ENCODE measurements at regions of chr18 and their contacts with region 1.

Region 1: DNA sequence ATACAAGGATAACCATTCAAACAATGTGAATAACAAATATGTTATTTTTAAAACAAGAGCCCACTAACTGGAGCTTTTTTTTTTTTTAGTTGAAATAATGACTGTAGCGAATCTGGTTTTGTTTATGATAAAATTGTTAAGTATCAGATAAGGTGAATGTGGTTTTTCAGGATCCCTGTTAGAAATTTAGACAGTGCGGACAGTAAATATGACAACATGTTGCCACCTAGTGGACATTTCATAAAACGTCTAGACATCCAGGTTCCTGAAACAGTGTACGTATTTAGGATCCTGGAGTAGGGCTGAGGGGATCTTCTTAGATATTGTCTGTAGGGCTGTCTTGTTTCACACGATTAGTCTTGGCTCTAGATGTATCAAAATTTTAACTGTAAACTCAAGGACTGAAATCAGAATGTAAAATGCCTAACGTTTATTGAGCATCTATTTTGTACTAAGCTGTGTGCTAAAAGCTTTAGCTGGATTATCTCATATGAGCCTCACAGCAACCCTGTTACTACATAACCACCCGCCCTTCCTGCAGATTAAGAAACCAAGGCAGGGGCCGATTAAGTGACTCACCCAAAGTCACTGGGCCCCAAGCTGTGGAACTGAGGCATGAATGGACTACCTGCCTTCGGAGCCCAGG is 23.9 kb upstream of the CCDC68 start:
- DNase-seq: peak; percentile 44
- ATAC-seq: peak; percentile 89
- H3K4me3 ChIP-seq: no peak overlapping the region
- H3K27ac ChIP-seq: no peak overlapping the region
- H3K4me1 ChIP-seq: no peaks in the 10 kb centered on the region
- H3K27me3 ChIP-seq: 0 out of 5 replicates have a peak, but pooled peaks cover 0 to 2% of the 10 kb centered on the region in 2 experiments
- CTCF ChIP-seq: peak; percentile 79
- EP300 ChIP-seq: no peak
- POLR2A ChIP-seq: no peak
- RAD21 ChIP-seq: peak; percentile 65; the same call in 1 of the 2 replicates

Region 2: DNA sequence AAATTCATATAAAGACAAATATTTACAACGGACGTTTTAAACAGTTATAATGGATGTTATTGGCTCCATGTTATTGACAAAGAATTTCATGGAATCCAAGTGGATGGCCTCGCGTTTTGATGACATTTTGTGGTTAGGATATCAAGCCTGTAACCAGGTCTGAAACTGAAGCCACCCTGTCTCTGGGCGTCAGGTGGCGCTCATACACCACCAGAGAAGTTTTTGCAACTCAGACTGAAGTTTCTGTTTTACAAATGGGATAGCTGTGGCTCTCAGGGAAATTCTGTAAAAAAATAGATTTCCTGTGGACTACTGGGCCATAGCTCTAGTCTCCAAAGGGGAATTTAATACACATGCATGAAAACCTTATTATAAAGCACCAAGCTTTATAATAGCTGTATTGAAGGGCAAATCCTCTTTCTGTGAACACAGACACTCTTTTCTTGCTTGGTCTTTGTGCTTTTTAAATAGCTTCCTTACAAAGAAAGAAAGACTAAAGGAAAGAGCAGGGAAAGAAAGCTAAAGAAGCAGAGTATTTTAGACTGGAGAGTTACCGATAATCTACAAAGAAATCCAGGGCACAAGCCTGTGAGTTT is 538.7 kb before region 1 on chr18:
- CTCF ChIA-PET with region 1: interaction called, 4 read pairs
- POLR2A ChIA-PET with region 1: no interaction called
- in situ Hi-C with region 1: no loop called
- intact Hi-C with region 1: loop called (anchors 2 kb)
- DNase-seq: peak; percentile 32
- ATAC-seq: peak; percentile 87
- H3K4me3 ChIP-seq: no peak overlapping the region
- H3K27ac ChIP-seq: no peak overlapping the region
- H3K4me1 ChIP-seq: no peaks in the 10 kb centered on the region
- H3K27me3 ChIP-seq: no peaks in the 10 kb centered on the region
- CTCF ChIP-seq: peak; percentile 74
- EP300 ChIP-seq: no peak
- POLR2A ChIP-seq: no peak
- RAD21 ChIP-seq: peak; percentile 60

Region 3: DNA sequence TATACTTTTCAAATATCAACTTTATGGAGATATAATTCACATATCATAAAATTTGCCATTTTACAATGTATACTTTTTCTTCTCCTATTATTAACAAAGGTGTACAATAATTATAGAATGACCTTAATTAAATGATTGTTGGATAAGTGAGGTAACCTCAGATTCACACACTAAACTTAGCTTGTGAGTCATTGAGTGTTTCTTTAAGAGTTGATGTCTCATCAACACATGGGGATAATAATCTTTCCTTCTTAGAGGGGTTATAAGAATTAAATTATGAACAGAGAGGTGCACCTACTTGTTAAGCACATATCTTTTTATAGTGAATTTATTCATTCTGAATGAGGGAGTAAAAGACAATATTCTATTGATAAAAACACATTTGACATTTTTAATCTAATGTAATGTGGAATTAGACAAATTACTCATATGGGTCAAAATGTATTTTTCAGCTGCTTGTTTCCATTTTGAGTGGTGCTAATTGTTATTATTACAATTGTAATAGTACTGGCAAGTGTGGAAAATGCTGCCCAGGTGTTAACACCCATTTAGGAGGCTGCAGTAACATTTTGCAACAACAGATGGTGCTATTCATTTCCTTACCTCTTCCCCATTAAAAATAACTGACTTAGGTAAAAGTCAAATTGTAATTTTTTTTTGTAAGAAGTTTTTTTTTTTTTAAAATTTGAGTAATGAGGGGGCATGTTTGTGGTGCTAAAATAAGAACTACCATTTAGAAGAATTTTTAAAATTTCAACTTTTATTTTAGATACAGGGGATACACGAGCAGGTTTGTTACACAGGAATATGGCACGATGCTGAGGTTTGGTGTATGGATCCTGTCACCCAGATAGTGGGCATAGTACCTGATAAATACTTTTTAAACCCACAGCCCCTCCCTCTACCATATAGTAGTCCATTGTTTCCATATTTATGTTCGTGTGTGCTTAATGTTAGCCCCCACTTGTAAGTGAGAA is 424.3 kb before region 1 on chr18:
- CTCF ChIA-PET with region 1: interaction called, 7 read pairs
- POLR2A ChIA-PET with region 1: no interaction called
- in situ Hi-C with region 1: no loop called
- intact Hi-C with region 1: loop called (anchors 1 kb)
- DNase-seq: peak; percentile 11
- ATAC-seq: no peak
- H3K4me3 ChIP-seq: no peak overlapping the region
- H3K27ac ChIP-seq: no peak overlapping the region
- H3K4me1 ChIP-seq: no peaks in the 10 kb centered on the region
- H3K27me3 ChIP-seq: no peaks in the 10 kb centered on the region
- CTCF ChIP-seq: peak; percentile 46
- EP300 ChIP-seq: no peak
- POLR2A ChIP-seq: no peak
- RAD21 ChIP-seq: no peak

Region 4: DNA sequence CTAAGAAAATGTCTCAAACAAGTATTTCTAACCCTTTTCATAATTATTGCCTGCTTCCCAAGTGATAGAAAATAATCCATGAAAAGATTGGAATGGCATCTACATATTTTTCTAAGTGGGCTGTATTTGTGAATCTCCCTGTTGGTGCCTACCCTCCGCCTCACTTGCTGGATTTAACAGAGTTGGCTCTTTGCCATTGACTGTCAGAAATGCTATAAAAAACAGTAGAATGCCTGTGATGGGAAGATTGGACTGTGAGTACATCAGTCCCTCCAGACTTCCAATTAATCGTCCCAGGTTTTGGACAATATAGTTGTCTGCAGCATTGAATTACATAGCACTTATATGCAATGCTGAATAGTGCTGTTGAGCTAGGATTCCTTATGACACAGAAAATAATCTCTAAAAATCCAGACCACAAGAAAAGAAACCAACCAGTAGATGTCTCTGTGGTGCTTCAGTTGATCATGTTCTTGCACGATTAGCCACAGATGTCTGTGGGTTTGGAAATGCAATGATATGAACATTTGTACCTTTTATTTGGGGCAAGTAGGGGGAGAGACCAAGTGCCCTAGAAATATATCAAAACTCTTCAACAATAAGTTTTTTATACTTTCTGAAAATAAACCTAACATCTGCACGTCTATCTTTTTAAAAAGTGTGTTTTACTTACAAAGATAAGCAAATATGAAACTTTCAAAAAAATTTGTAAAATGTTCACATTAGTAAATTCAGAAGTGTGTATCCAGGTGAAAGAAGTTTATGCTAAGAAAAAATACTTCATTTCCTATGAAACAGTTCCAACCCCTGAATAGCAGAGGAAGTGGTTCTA is 303.6 kb before region 1 on chr18:
- CTCF ChIA-PET with region 1: interaction called, 22 read pairs
- POLR2A ChIA-PET with region 1: no interaction called
- in situ Hi-C with region 1: loop called (anchors 5 kb)
- intact Hi-C with region 1: loop called (anchors 1 kb)
- DNase-seq: peak; percentile 25
- ATAC-seq: peak; percentile 68
- H3K4me3 ChIP-seq: no peak overlapping the region
- H3K27ac ChIP-seq: no peak overlapping the region
- H3K4me1 ChIP-seq: no peaks in the 10 kb centered on the region
- H3K27me3 ChIP-seq: no peaks in the 10 kb centered on the region
- CTCF ChIP-seq: peak; percentile 63
- EP300 ChIP-seq: no peak
- POLR2A ChIP-seq: no peak
- RAD21 ChIP-seq: peak; percentile 19; the same call in 1 of the 2 replicates

Region 5: DNA sequence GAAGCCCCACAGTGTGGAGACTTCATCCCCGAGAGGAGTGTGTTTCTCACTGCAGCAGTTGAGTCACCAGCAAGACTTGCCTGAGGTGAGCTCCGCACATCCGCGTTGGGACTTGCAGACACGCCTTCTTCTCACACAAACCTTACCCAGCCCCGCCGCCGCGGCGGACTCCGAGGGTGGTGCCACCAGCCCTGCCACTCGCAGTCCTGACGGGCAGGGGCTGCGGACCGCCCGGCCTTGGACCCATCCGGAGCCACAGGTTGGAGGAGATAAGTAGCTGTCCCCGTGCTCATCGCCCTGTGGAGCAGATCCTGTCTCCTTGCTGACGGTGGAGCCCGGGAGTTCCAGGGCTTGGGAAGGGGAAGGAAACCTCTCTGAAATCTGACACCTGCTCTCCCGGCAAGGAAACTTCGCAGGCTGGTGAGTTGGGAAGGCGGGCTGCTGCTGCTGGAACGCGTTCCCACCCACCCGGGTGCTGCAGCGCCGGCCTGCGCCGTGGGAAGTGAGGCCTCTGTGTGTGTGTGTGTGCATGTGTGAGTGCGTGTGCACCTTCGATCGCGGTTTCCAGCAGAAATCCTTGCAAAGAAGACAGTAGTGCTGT is 154.8 kb before region 1 on chr18 and contains the start of gene RAB27B:
- CTCF ChIA-PET with region 1: no interaction called
- POLR2A ChIA-PET with region 1: no interaction called
- in situ Hi-C with region 1: no loop called
- intact Hi-C with region 1: loop called (anchors 5 kb)
- DNase-seq: peak; percentile 25
- ATAC-seq: peak; percentile 96
- H3K4me3 ChIP-seq: peak within 1 kb of the TSS; percentile 38 to 64 (median 42); a peak in 5 of 6 replicates
- H3K27ac ChIP-seq: no peak within 1 kb of the TSS
- H3K4me1 ChIP-seq: peaks cover 13% of the 10 kb centered on the region
- H3K27me3 ChIP-seq: peaks cover 0 to 7% of the 10 kb centered on the region in 2 experiments; a peak in 3 of 5 replicates
- CTCF ChIP-seq: no peak
- EP300 ChIP-seq: no peak
- POLR2A ChIP-seq: no peak
- RAD21 ChIP-seq: no peak
- total RNA-seq, gene RAB27B: not detected in 2 replicates

Region 6: DNA sequence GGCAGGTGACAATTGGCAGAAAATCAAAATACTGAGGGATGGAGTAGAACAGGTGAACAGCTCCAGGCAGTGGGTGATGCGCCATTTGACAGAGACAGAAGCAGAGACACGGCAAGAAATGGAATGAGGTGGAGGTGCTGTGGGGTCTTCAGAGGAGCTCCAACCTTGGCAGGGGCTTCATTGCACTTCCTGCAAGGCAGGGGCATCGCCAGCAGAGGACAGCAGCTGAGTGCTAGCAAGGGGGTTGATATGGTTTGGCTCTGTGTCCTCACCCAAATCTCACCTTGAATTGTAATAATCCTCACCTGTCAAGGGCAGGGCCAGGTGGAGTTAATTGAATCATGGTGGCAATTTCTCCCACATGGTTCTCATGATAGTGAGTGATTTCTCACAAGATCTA is 66.7 kb before region 1 on chr18:
- CTCF ChIA-PET with region 1: interaction called, 4 read pairs
- POLR2A ChIA-PET with region 1: no interaction called
- in situ Hi-C with region 1: no loop called
- intact Hi-C with region 1: loop called (anchors 1 kb)
- DNase-seq: no peak
- ATAC-seq: peak; percentile 47; the same call in 2 of the 3 replicates
- H3K4me3 ChIP-seq: no peak overlapping the region
- H3K27ac ChIP-seq: no peak overlapping the region
- H3K4me1 ChIP-seq: no peaks in the 10 kb centered on the region
- H3K27me3 ChIP-seq: no peaks in the 10 kb centered on the region
- CTCF ChIP-seq: peak; percentile 53
- EP300 ChIP-seq: no peak
- POLR2A ChIP-seq: no peak
- RAD21 ChIP-seq: no peak

Region 7: GRCh38 chr18:55048892-55049291 is 65.7 kb after region 1 on chr18:
- CTCF ChIA-PET with region 1: no interaction called
- POLR2A ChIA-PET with region 1: no interaction called
- in situ Hi-C with region 1: no loop called
- intact Hi-C with region 1: no loop called
- DNase-seq: no peak
- ATAC-seq: no peak
- H3K4me3 ChIP-seq: no peak overlapping the region
- H3K27ac ChIP-seq: no peak overlapping the region
- H3K4me1 ChIP-seq: no peaks in the 10 kb centered on the region
- H3K27me3 ChIP-seq: no peaks in the 10 kb centered on the region
- CTCF ChIP-seq: no peak
- EP300 ChIP-seq: no peak
- POLR2A ChIP-seq: no peak
- RAD21 ChIP-seq: no peak